H1 (cell line): ENCODE measurements at regions of chr3 and their contacts with region 1.

Region 1: DNA sequence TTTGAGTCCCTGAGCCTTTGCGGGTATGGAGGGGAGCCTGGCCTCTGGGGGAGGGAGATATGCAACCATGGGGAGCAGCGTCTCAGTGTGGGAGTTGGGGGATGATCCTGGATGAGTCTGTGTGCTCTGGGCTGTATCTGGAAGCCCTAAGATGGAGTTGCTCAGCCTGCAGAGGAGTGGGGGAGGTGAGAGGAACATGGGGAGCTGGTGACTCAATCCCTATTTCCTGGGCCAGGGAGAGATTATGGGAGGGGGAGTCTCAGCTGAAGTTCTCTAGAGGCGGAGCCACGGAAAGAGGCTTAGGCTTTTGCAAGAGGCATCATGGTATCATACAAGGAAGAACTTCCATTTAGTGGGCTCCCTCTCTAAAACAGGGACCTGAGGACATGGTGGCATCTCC is 59.5 kb upstream of the TMEM115 start:
- DNase-seq: no peak
- H3K4me3 ChIP-seq: no peak overlapping the region
- H3K27ac ChIP-seq: no peak overlapping the region
- H3K4me1 ChIP-seq: peaks cover 0 to 2% (median 0%) of the 10 kb centered on the region in 4 experiments; a peak in 1 of 7 replicates
- H3K27me3 ChIP-seq: no peaks in the 10 kb centered on the region; a peak in 1 of 7 replicates
- CTCF ChIP-seq: no peak
- EP300 ChIP-seq: no peak
- POLR2A ChIP-seq: no peak
- RAD21 ChIP-seq: no peak

Region 2: GRCh38 chr3:50138266-50139200 is 280.3 kb before region 1 on chr3:
- CTCF ChIA-PET with region 1: no interaction called
- POLR2A ChIA-PET with region 1: no interaction called
- DNase-seq: peak in 1 of 2 experiments; percentile 71
- H3K4me3 ChIP-seq: peak overlapping the region in 3 of 4 experiments; percentile 17 to 45 (median 36); a peak in 3 of 8 replicates
- H3K27ac ChIP-seq: peak overlapping the region; percentile 41; the same call in 1 of the 2 replicates
- H3K4me1 ChIP-seq: peaks cover 4 to 32% (median 28%) of the 10 kb centered on the region in 4 experiments
- H3K27me3 ChIP-seq: no peaks in the 10 kb centered on the region; a peak in 1 of 7 replicates
- CTCF ChIP-seq: no peak
- EP300 ChIP-seq: no peak
- POLR2A ChIP-seq: no peak; a peak in 1 of 3 replicates
- RAD21 ChIP-seq: no peak

Region 3: DNA sequence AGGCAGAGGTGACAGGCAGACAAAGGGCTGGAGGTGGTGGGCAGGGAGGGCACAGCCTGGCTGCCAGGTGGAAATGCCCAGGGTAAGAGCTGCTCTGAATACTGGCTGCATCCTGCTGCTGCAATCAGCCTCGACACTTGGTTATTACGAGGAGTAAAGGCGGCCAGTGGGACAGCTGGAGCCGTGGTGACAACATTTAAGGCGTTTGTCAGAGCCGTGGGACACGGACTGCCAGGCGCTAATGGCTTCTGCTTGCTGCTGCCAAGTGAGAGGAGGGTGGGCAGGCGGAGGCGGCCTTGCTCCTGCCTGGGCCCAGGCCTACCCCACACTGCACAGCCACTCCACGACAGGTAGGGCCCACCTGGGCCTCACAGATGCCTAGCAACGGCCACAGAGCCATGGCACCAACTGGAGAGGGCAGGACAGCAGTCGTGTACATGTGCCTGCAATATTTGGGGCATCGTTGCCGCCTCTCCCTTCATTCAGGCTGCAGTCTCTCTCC is 10.4 kb before region 1 on chr3:
- CTCF ChIA-PET with region 1: interaction called, 11 read pairs
- POLR2A ChIA-PET with region 1: interaction called, 3 read pairs
- DNase-seq: no peak
- H3K4me3 ChIP-seq: no peak overlapping the region
- H3K27ac ChIP-seq: no peak overlapping the region
- H3K4me1 ChIP-seq: no peaks in the 10 kb centered on the region; a peak in 2 of 7 replicates
- H3K27me3 ChIP-seq: peaks cover 0 to 3% (median under 1%) of the 10 kb centered on the region in 4 experiments; a peak in 3 of 7 replicates
- CTCF ChIP-seq: no peak
- EP300 ChIP-seq: no peak
- POLR2A ChIP-seq: no peak
- RAD21 ChIP-seq: no peak

Region 4: DNA sequence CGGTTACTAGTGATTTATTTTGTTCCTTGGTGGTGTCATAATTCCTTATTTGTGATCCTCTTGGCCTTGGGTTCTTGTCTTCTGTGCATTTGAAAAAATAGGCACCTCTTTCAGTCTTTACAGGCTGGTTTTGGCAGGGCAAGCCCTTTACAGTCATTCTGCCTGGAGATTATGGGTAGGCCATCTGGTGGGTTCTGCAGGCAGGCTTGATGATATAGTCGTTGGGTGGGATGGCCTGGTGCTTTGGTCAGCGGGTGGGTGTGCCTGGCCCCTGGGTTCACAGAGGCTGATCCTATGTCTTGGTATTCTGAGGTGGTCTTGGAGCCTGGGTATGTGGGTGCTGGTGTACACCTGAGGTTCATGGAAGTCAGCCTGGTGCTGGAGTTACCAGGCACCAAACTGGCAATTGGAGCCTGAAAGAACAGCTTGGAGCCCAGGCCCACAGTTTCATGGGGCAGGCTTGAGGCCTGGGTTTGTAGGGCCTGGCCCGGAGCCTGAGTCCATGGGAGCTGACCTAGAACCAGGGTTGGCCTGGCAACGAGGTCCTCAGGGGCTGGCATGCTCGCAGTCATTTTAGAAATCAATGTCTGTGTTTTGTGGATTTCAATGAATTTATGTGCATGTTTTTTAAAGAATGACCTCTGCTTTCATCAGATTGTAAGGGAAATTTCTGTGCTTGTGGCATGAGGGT is 319.2 kb after region 1 on chr3:
- CTCF ChIA-PET with region 1: no interaction called
- POLR2A ChIA-PET with region 1: no interaction called
- DNase-seq: no peak
- H3K4me3 ChIP-seq: no peak overlapping the region
- H3K27ac ChIP-seq: no peak overlapping the region; the same call in 1 of the 2 replicates
- H3K4me1 ChIP-seq: peaks cover 3 to 8% (median 6%) of the 10 kb centered on the region in 4 experiments; a peak in 4 of 7 replicates
- H3K27me3 ChIP-seq: no peaks in the 10 kb centered on the region
- CTCF ChIP-seq: no peak
- EP300 ChIP-seq: no peak
- POLR2A ChIP-seq: no peak
- RAD21 ChIP-seq: no peak